Activated T-helper 1 cell treated with anti-CD3 and anti-CD28 coated beads, Interleukin-12 subunit alpha, Interleukin-12 subunit beta, Interleukin-2, Interleukin-4 antibody, amounts not matched to agents 30 ng/mL and 10 ng/mL and 1 ng/mL, durations not matched to agents 14 hours and 24 hours and 36 hours (primary cell): ENCODE measurements at regions of chr9 and their contacts with region 1.

Region 1: GRCh38 chr9:33374634-33375213 is 27.6 kb downstream of the AQP7 start:
- DNase-seq: peak; percentile 57
- H3K4me3 Mint-ChIP-seq: no peak overlapping the region
- H3K27ac Mint-ChIP-seq: peak overlapping the region; percentile 24
- H3K4me1 Mint-ChIP-seq: peaks cover 14% of the 10 kb centered on the region
- H3K27me3 Mint-ChIP-seq: no peaks in the 10 kb centered on the region

Region 2: GRCh38 chr9:32703635-32704034 is 671.1 kb before region 1 on chr9:
- intact Hi-C with region 1: no loop called
- DNase-seq: no peak
- H3K4me3 Mint-ChIP-seq: no peak overlapping the region
- H3K27ac Mint-ChIP-seq: no peak overlapping the region
- H3K4me1 Mint-ChIP-seq: no peaks in the 10 kb centered on the region
- H3K27me3 Mint-ChIP-seq: peaks cover 8% of the 10 kb centered on the region

Region 3: DNA sequence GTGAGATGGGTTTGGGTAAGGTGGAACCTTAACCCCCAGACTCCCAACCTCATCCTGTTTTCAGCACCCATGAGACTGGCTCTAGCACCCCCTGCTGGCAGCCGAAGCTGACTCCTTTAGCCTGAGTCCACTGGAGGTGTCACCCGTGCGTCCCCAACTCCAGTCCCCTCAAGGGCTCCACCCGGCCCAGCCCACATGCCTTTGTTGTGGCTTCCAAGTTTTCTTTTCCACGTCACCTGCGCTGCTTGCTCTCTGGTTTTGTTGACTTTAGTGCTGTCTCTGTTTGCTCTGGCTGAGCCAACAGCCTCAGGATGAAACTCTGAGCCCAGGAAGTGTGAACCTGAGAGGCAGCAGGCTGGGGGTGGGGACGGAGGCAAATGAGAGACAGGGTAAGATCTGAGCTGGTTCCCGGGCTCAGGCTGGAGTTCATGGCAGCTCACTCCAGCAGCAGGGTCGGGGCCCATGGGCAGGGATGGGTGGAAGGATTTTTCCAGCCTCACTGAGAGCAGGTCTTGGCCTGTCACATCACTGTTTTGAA is 40.8 kb after region 1 on chr9:
- intact Hi-C with region 1: loop called (anchors 2 kb)
- DNase-seq: peak; percentile 91
- H3K4me3 Mint-ChIP-seq: peak overlapping the region; percentile 76
- H3K27ac Mint-ChIP-seq: peak overlapping the region; percentile 95
- H3K4me1 Mint-ChIP-seq: peaks cover 53% of the 10 kb centered on the region
- H3K27me3 Mint-ChIP-seq: peaks cover under 1% of the 10 kb centered on the region

Region 4: GRCh38 chr9:33446946-33447798 is 72.4 kb after region 1 on chr9 and contains the start of gene AQP3:
- intact Hi-C with region 1: loop called (anchors 1 kb)
- DNase-seq: peak; percentile 72
- H3K4me3 Mint-ChIP-seq: peak within 1 kb of the TSS; percentile 93
- H3K27ac Mint-ChIP-seq: peak within 1 kb of the TSS; percentile 90
- H3K4me1 Mint-ChIP-seq: peaks cover 40% of the 10 kb centered on the region
- H3K27me3 Mint-ChIP-seq: no peaks in the 10 kb centered on the region
- total RNA-seq, gene AQP3: 3.4 and 6.1 TPM in 2 replicates

Region 5: GRCh38 chr9:33466565-33467495 is 92.1 kb after region 1 on chr9:
- intact Hi-C with region 1: loop called (anchors 1 kb)
- DNase-seq: peak; percentile 59
- H3K4me3 Mint-ChIP-seq: no peak overlapping the region
- H3K27ac Mint-ChIP-seq: no peak overlapping the region
- H3K4me1 Mint-ChIP-seq: peaks cover 8% of the 10 kb centered on the region
- H3K27me3 Mint-ChIP-seq: no peaks in the 10 kb centered on the region